ENCODE measurements at regions of chr1 and their contacts with region 1.

Region 1: DNA sequence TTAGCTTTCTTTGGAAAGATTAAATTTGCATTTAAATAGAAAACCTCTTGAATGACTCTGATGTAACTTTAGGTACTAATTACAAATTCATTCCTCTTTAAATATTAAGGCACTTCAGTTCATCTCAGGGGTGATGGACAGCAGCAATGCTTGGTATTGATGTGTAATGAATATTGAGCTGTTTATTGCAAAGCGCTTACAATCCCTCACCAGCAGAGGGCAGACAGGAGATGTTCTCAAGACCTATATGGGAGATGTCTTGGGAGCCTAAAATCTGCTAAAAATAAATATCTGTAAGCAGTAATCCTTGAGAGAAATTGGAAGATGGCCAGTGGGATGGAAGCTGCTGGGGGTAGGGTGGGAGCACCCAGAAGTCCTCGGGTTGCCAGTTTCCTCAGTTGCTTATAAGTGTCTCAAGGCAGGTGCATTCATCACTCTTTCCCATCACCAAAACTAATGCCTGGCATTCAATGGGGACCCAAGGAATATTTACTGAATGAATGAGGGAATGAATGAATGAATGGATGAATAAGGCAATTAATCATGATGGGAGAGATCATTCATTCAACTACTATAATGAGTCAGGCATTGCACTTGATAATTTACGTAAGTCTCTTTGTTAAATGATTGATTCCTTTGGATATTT is 2.3 kb downstream of the KLHDC8A start:
- DNase-seq: peak; percentile 78
- ATAC-seq: peak; percentile 58
- H3K4me3 ChIP-seq: no peak overlapping the region
- H3K4me3 Mint-ChIP-seq: no peak overlapping the region
- H3K27ac ChIP-seq: no peak overlapping the region
- H3K27ac Mint-ChIP-seq: no peak overlapping the region
- H3K4me1 ChIP-seq: peaks cover 16 to 20% of the 10 kb centered on the region in 2 donors
- H3K4me1 Mint-ChIP-seq: peaks cover 29% of the 10 kb centered on the region
- H3K27me3 ChIP-seq: peaks cover 0 to 4% (median 0%) of the 10 kb centered on the region in 4 experiments
- H3K27me3 Mint-ChIP-seq: peaks cover 19% of the 10 kb centered on the region
- CTCF ChIP-seq: peak; percentile 95

Region 2: GRCh38 chr1:204885288-204885711 is 469.1 kb before region 1 on chr1:
- CTCF ChIA-PET with region 1: no interaction called
- POLR2A ChIA-PET with region 1: no interaction called
- intact Hi-C with region 1: no loop called
- DNase-seq: no peak
- ATAC-seq: no peak
- H3K4me3 ChIP-seq: no peak overlapping the region
- H3K4me3 Mint-ChIP-seq: no peak overlapping the region
- H3K27ac ChIP-seq: no peak overlapping the region
- H3K27ac Mint-ChIP-seq: no peak overlapping the region
- H3K4me1 ChIP-seq: peaks cover 11% of the 10 kb centered on the region in 2 donors
- H3K4me1 Mint-ChIP-seq: peaks cover 9% of the 10 kb centered on the region
- H3K27me3 ChIP-seq: no peaks in the 10 kb centered on the region
- H3K27me3 Mint-ChIP-seq: peaks cover 13% of the 10 kb centered on the region
- CTCF ChIP-seq: no peak

Region 3: GRCh38 chr1:205190845-205191577 is 163.4 kb before region 1 on chr1:
- CTCF ChIA-PET with region 1: no interaction called
- POLR2A ChIA-PET with region 1: no interaction called
- intact Hi-C with region 1: no loop called
- DNase-seq: no peak
- ATAC-seq: no peak
- H3K4me3 ChIP-seq: no peak overlapping the region
- H3K4me3 Mint-ChIP-seq: no peak overlapping the region
- H3K27ac ChIP-seq: no peak overlapping the region
- H3K27ac Mint-ChIP-seq: no peak overlapping the region
- H3K4me1 ChIP-seq: no peaks in the 10 kb centered on the region
- H3K4me1 Mint-ChIP-seq: peaks cover 39% of the 10 kb centered on the region
- H3K27me3 ChIP-seq: no peaks in the 10 kb centered on the region
- H3K27me3 Mint-ChIP-seq: no peaks in the 10 kb centered on the region
- CTCF ChIP-seq: no peak

Region 4: DNA sequence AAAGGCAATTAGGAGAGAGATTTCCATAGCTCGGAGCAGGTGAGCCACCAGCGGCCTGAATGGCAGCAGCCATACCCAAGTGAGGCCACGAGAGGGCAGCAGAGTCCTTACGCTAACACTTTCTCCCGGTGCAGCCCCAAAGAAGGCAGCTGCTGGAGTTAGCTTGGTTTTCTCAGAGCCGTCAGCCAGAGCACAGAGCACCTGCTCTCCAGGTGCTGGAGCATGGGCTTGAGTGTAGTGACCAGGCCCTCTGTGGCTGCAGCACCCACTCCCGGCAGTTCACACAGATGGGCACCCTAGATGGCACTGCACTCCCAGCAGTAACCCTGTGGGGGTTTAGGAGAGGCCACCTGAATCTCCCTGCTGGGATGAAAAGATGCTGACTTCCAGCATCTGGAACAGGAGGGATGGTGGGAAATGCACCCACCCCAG is 80.8 kb before region 1 on chr1:
- CTCF ChIA-PET with region 1: interaction called, 85 read pairs
- POLR2A ChIA-PET with region 1: no interaction called
- intact Hi-C with region 1: loop called (anchors 1 kb)
- DNase-seq: peak; percentile 90
- ATAC-seq: peak; percentile 83
- H3K4me3 ChIP-seq: peak overlapping the region in 3 of 5 experiments; percentile 5 to 27 (median 23)
- H3K4me3 Mint-ChIP-seq: peak overlapping the region; percentile 78
- H3K27ac ChIP-seq: peak overlapping the region in 1 of 2 donors; percentile 37
- H3K27ac Mint-ChIP-seq: peak overlapping the region; percentile 94
- H3K4me1 ChIP-seq: peaks cover 51 to 54% of the 10 kb centered on the region in 2 donors
- H3K4me1 Mint-ChIP-seq: peaks cover 46% of the 10 kb centered on the region
- H3K27me3 ChIP-seq: no peaks in the 10 kb centered on the region
- H3K27me3 Mint-ChIP-seq: no peaks in the 10 kb centered on the region
- CTCF ChIP-seq: peak; percentile 97

Region 5: DNA sequence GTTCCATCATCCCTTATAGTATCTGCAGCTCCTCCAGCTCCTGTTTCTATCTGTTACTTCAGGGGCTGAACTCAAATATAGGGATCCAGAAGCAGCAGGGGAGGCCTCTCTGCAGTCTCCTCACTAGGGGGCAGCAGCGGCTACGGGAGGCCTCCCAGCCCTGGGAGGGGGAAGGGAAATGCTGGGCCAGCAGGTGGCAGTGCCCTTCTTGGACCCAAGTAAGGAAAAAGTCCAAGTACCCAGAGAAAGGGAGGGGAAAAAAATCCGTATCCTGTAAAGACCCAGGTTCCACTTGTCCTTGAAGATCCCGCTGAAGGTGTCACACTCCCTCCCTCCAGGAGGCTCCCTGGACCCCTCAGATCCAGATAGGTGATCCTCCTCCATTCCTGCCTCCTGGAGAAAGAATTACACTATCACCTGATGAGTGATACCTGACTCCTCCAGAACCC is 18.7 kb before region 1 on chr1:
- CTCF ChIA-PET with region 1: interaction called, 85 read pairs
- POLR2A ChIA-PET with region 1: no interaction called
- intact Hi-C with region 1: loop called (anchors 2 kb)
- DNase-seq: peak; percentile 87
- ATAC-seq: peak; percentile 96
- H3K4me3 ChIP-seq: no peak overlapping the region
- H3K4me3 Mint-ChIP-seq: no peak overlapping the region
- H3K27ac ChIP-seq: no peak overlapping the region
- H3K27ac Mint-ChIP-seq: no peak overlapping the region
- H3K4me1 ChIP-seq: peaks cover 0 to 4% of the 10 kb centered on the region in 2 donors
- H3K4me1 Mint-ChIP-seq: peaks cover 9% of the 10 kb centered on the region
- H3K27me3 ChIP-seq: no peaks in the 10 kb centered on the region
- H3K27me3 Mint-ChIP-seq: no peaks in the 10 kb centered on the region
- CTCF ChIP-seq: peak; percentile 91

Region 6: DNA sequence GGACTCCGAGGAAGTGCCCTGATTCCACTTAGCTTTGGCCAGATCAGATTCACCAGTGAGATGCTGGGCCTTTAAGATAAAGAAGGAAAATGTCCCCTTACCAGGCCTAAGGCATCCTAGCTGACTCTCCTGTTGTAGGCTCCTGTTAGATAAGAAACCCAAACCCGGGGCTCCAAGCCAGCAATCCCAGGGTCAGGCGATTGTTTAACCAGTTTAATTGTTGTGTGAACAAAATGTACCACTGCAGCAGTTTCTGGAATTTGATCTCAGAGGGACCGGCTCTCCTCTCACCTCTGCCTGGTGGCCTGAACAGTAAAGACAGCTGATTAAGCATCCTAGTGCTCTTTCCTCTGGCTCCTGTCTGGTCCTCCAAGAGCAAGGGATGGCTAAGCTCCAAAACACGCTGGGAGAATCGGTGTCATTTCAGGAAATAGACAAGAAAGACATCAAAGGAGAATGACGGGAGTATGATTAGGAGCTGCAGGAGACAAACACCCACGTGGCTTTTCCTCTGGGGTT is 11.6 kb after region 1 on chr1:
- CTCF ChIA-PET with region 1: interaction called, 10 read pairs
- POLR2A ChIA-PET with region 1: interaction called, 3 read pairs
- intact Hi-C with region 1: no loop called
- DNase-seq: no peak
- ATAC-seq: no peak
- H3K4me3 ChIP-seq: no peak overlapping the region
- H3K4me3 Mint-ChIP-seq: no peak overlapping the region
- H3K27ac ChIP-seq: no peak overlapping the region
- H3K27ac Mint-ChIP-seq: no peak overlapping the region
- H3K4me1 ChIP-seq: no peaks in the 10 kb centered on the region
- H3K4me1 Mint-ChIP-seq: no peaks in the 10 kb centered on the region
- H3K27me3 ChIP-seq: peaks cover 0 to 2% (median 0%) of the 10 kb centered on the region in 4 experiments
- H3K27me3 Mint-ChIP-seq: peaks cover 11% of the 10 kb centered on the region
- CTCF ChIP-seq: no peak

Region 7: GRCh38 chr1:205430696-205431305 is 76.4 kb after region 1 on chr1:
- CTCF ChIA-PET with region 1: interaction called, 17 read pairs
- POLR2A ChIA-PET with region 1: no interaction called
- intact Hi-C with region 1: loop called (anchors 2 kb)
- DNase-seq: peak; percentile 88
- ATAC-seq: peak; percentile 91
- H3K4me3 ChIP-seq: peak overlapping the region; percentile 23 to 54 (median 46)
- H3K4me3 Mint-ChIP-seq: peak overlapping the region; percentile 80
- H3K27ac ChIP-seq: peak overlapping the region; percentile 4 to 43
- H3K27ac Mint-ChIP-seq: peak overlapping the region; percentile 70
- H3K4me1 ChIP-seq: peaks cover 25 to 33% of the 10 kb centered on the region in 2 donors
- H3K4me1 Mint-ChIP-seq: peaks cover 39% of the 10 kb centered on the region
- H3K27me3 ChIP-seq: no peaks in the 10 kb centered on the region
- H3K27me3 Mint-ChIP-seq: no peaks in the 10 kb centered on the region
- CTCF ChIP-seq: peak; percentile 70

Region 8: DNA sequence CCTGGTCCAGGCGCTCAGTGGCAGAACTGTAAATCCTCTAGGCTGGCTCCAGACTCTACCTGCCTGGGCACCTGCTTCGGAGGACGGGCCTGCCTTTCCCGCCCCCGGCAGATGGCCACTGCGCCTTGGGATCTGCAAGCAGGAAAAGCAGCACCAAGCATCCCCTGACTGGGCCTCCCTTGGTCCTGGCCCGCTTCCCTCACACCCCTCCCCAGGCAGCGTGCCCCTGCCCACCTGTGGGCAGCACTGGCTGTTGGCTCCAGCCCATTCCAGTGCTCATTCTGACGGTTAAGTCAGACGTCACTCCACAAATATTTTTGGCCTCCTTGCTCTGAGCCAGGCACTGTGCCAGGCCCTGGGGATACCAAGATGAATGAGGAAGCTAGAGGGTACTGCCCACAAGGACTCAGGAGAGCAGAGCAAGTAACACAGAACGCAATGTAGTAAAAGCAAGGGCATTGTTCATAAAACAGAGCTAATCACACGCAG is 123.4 kb after region 1 on chr1:
- CTCF ChIA-PET with region 1: interaction called, 12 read pairs
- POLR2A ChIA-PET with region 1: no interaction called
- intact Hi-C with region 1: no loop called
- DNase-seq: no peak
- ATAC-seq: no peak
- H3K4me3 ChIP-seq: no peak overlapping the region
- H3K4me3 Mint-ChIP-seq: no peak overlapping the region
- H3K27ac ChIP-seq: no peak overlapping the region
- H3K27ac Mint-ChIP-seq: no peak overlapping the region
- H3K4me1 ChIP-seq: peaks cover 26 to 29% of the 10 kb centered on the region in 2 donors
- H3K4me1 Mint-ChIP-seq: peaks cover 27% of the 10 kb centered on the region
- H3K27me3 ChIP-seq: peaks cover 0 to 35% (median 10%) of the 10 kb centered on the region in 4 experiments
- H3K27me3 Mint-ChIP-seq: peaks cover 24% of the 10 kb centered on the region
- CTCF ChIP-seq: no peak

Region 9: GRCh38 chr1:205493241-205494085 is 139.1 kb after region 1 on chr1:
- CTCF ChIA-PET with region 1: interaction called, 115 read pairs
- POLR2A ChIA-PET with region 1: interaction called, 3 read pairs
- intact Hi-C with region 1: no loop called
- DNase-seq: no peak
- ATAC-seq: no peak
- H3K4me3 ChIP-seq: no peak overlapping the region
- H3K4me3 Mint-ChIP-seq: no peak overlapping the region
- H3K27ac ChIP-seq: no peak overlapping the region
- H3K27ac Mint-ChIP-seq: no peak overlapping the region
- H3K4me1 ChIP-seq: no peaks in the 10 kb centered on the region
- H3K4me1 Mint-ChIP-seq: no peaks in the 10 kb centered on the region
- H3K27me3 ChIP-seq: peaks cover 0 to 47% (median 9%) of the 10 kb centered on the region in 4 experiments
- H3K27me3 Mint-ChIP-seq: peaks cover 68% of the 10 kb centered on the region
- CTCF ChIP-seq: no peak

Measured in B cell (primary cell).